Mammary epithelial cell (primary cell): ENCODE measurements at regions of chr3 and their contacts with region 1.

Region 1: GRCh38 chr3:149566292-149566975 is 91.4 kb downstream of the WWTR1 start:
- DNase-seq: no peak
- H3K4me3 ChIP-seq: no peak overlapping the region
- H3K27ac ChIP-seq: no peak overlapping the region
- H3K4me1 ChIP-seq: peaks cover 4% of the 10 kb centered on the region
- H3K27me3 ChIP-seq: no peaks in the 10 kb centered on the region
- CTCF ChIP-seq: no peak

Region 2: DNA sequence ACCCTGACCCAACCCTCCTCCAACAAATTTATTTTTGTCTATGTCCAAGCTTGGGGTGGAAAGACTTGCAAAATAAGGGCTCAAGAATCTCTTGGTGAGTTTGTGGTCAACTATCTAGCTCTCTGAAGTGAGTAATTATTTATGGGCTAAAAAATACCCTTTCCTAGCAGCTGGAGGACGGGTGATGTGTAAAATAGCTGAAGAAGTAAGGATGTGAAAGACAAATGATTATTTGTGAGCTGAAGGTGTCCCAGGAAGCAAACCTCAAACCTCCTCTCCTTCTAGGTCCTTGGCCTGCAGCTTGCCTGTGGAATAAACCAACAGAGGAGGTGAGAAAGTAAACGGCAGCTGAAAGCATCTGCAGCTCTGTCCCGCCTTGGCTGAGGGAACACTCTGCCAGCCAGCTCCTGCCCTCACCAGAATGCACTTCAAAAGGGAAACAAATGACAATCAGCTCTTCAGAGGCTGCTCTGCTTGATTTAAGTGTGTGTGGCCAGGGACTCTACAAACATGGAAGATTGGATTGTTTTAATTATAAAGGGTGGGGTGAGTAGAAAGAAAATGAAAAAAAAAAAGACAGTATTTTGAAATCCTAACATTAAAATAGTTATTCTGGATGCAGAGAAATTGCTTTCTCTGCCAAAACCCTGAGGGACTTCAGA is 31.6 kb before region 1 on chr3:
- CTCF ChIA-PET with region 1: interaction called, 4 read pairs
- dilution Hi-C with region 1: no loop called
- in situ Hi-C with region 1: no loop called
- intact Hi-C with region 1: loop called (anchors 5 kb)
- DNase-seq: peak; percentile 47
- H3K4me3 ChIP-seq: no peak overlapping the region
- H3K27ac ChIP-seq: peak overlapping the region; percentile 34
- H3K4me1 ChIP-seq: peaks cover 22% of the 10 kb centered on the region
- H3K27me3 ChIP-seq: no peaks in the 10 kb centered on the region
- CTCF ChIP-seq: no peak

Region 3: GRCh38 chr3:149717391-149718056 is 151.1 kb after region 1 on chr3:
- CTCF ChIA-PET with region 1: interaction called, 3 read pairs
- dilution Hi-C with region 1: no loop called
- in situ Hi-C with region 1: loop called in 1 of 2 experiments (anchors 10 kb)
- intact Hi-C with region 1: loop called (anchors 1 kb)
- DNase-seq: peak; percentile 59
- H3K4me3 ChIP-seq: no peak overlapping the region
- H3K27ac ChIP-seq: no peak overlapping the region
- H3K4me1 ChIP-seq: peaks cover 8% of the 10 kb centered on the region
- H3K27me3 ChIP-seq: no peaks in the 10 kb centered on the region
- CTCF ChIP-seq: peak; percentile 65 to 71